Sigmoid colon (tissue), 7 donors: ENCODE measurements at regions of chr10 and their contacts with region 1.

Region 1: GRCh38 chr10:6144406-6145165 is 55.8 kb downstream of the RBM17 start:
- DNase-seq: peak; percentile 95
- H3K4me3 ChIP-seq: peak overlapping the region; percentile 75 to 93 (median 82)
- H3K27ac ChIP-seq: peak overlapping the region; percentile 81 to 91 (median 86)
- H3K4me1 ChIP-seq: peaks cover 0 to 22% (median 16%) of the 10 kb centered on the region in 4 donors
- H3K27me3 ChIP-seq: peaks cover 0 to 14% (median 0%) of the 10 kb centered on the region in 3 donors
- CTCF ChIP-seq: no peak
- EP300 ChIP-seq: no peak
- POLR2A ChIP-seq: peak in 1 of 2 donors; percentile 14

Region 2: GRCh38 chr10:6108603-6109443 is 35.8 kb before region 1 on chr10:
- intact Hi-C with region 1: loop called (anchors 2 kb)
- DNase-seq: no peak
- H3K4me3 ChIP-seq: no peak overlapping the region
- H3K27ac ChIP-seq: no peak overlapping the region
- H3K4me1 ChIP-seq: peaks cover 0 to 3% (median 0%) of the 10 kb centered on the region in 4 donors
- H3K27me3 ChIP-seq: no peaks in the 10 kb centered on the region
- CTCF ChIP-seq: peak; percentile 62 to 71 (median 67)
- EP300 ChIP-seq: no peak
- POLR2A ChIP-seq: no peak

Region 3: DNA sequence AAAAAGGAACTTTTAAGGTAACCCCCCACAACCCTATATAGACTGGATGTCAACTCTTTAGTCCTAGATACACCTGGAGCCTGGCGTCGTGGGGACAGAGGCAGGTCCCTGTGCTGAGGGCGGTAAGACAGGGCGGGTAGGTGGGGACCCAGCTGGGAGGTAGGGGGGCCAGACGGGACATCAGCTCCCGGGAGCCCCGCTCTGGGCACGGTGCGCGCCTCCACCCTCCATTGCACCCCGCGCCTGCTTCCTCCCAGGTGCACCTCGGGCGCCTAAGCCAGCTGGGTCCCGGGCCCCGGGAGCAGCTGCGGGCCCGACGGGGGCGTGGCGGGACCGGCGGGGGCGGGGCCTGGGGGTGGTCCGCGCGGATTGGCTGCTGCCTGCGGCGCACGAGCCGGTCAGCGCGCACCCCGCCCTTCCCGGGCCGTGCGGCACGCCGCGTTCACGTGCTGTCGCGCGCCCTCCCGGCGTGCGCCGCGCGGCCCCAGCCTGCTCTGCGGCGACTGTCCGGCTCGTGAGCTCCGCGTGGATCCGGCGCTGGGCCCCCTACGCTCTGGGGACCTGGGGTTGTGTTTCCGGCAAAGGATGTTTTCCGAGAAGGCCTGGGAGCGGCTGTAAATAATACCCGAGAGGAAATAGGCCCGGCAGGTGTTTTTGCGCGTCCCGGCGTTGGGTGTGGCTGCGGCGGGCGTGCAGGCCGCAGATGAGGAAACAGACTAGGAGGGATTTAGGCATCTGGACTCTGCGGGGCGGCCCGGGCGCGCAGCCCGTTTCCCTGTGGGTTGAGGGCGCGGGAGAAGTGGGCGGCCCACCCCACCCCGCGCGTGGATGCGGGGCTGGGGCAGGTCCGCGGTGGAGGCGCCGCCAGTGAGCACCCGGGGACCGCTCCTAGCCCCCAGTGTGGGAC is 19.0 kb after region 1 on chr10:
- intact Hi-C with region 1: loop called (anchors 2 kb)
- DNase-seq: peak; percentile 95
- H3K4me3 ChIP-seq: peak overlapping the region; percentile 62 to 73 (median 66)
- H3K27ac ChIP-seq: peak overlapping the region; percentile 90 to 97 (median 94)
- H3K4me1 ChIP-seq: peaks cover 0 to 38% (median 33%) of the 10 kb centered on the region in 4 donors
- H3K27me3 ChIP-seq: no peaks in the 10 kb centered on the region
- CTCF ChIP-seq: no peak
- EP300 ChIP-seq: peak in 2 of 4 donors; percentile 33 to 57
- POLR2A ChIP-seq: peak; percentile 52 to 61